AG04449 (cell line): ENCODE measurements at regions of chr2 and their contacts with region 1.

Region 1: GRCh38 chr2:60707750-60708371 is 48.2 kb upstream of the PAPOLG start:
- DNase-seq: no peak
- H3K4me3 ChIP-seq: no peak overlapping the region
- CTCF ChIP-seq: peak; percentile 44

Region 2: GRCh38 chr2:60337140-60337494 is 370.7 kb before region 1 on chr2:
- CTCF ChIA-PET with region 1: no interaction called
- POLR2A ChIA-PET with region 1: no interaction called
- DNase-seq: no peak
- H3K4me3 ChIP-seq: no peak overlapping the region
- CTCF ChIP-seq: peak; percentile 28

Region 3: DNA sequence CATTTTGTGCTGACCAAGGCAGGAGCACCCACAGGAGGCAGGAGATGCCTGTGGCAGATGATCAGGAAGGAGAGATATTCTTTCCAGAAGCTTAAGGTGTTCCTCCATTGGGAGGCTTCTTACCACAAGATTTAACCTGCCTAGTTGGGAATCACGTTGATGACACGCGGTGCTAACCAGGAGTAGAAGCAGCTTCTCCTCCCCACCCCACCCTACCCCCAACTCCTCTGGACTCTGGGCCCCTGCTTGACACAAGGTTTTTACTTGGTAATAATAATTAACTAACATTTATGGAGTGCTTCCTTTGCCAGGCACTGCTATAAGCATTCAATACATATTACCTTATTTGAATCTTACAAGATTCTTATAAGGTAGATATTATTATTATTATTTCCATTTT is 14.3 kb before region 1 on chr2:
- CTCF ChIA-PET with region 1: interaction called, 60 read pairs
- POLR2A ChIA-PET with region 1: no interaction called
- DNase-seq: no peak
- H3K4me3 ChIP-seq: no peak overlapping the region
- CTCF ChIP-seq: no peak

Region 4: GRCh38 chr2:60756191-60757041 is 48.6 kb after region 1 on chr2 and contains the start of gene PAPOLG:
- CTCF ChIA-PET with region 1: interaction called, 11 read pairs
- POLR2A ChIA-PET with region 1: no interaction called
- DNase-seq: peak; percentile 42
- H3K4me3 ChIP-seq: peak within 1 kb of the TSS; percentile 98
- CTCF ChIP-seq: no peak

Region 5: GRCh38 chr2:61006486-61007105 is 298.7 kb after region 1 on chr2:
- CTCF ChIA-PET with region 1: interaction called, 171 read pairs
- POLR2A ChIA-PET with region 1: no interaction called
- DNase-seq: no peak
- H3K4me3 ChIP-seq: no peak overlapping the region
- CTCF ChIP-seq: no peak